ENCODE measurements at regions of chr12 and their contacts with region 1.

Region 1: DNA sequence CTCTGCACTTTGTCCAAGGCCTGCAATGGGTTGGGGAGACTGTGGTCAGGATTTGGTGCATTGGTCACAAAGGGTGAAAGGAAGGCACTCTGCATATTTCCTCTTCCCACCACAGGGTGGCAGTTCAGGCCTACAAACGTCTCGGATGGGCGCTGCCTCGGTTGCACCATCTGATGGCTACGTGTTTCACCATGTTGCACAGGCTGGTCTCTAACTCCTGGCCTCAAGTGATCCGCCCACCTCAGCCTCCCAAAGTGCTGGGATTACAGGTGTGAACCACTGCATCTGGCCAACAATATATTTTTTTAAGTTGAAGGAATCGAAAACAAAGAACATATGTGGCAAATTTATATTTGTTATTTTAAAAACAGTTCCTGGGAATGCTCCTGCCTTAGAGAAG is 35.1 kb downstream of the TMBIM6 start:
- DNase-seq: no peak
- ATAC-seq: peak; percentile 85
- H3K4me3 Mint-ChIP-seq: no peak overlapping the region
- H3K27ac Mint-ChIP-seq: no peak overlapping the region
- H3K4me1 Mint-ChIP-seq: peaks cover 13% of the 10 kb centered on the region
- H3K27me3 Mint-ChIP-seq: peaks cover 17% of the 10 kb centered on the region
- CTCF ChIP-seq: no peak

Region 2: DNA sequence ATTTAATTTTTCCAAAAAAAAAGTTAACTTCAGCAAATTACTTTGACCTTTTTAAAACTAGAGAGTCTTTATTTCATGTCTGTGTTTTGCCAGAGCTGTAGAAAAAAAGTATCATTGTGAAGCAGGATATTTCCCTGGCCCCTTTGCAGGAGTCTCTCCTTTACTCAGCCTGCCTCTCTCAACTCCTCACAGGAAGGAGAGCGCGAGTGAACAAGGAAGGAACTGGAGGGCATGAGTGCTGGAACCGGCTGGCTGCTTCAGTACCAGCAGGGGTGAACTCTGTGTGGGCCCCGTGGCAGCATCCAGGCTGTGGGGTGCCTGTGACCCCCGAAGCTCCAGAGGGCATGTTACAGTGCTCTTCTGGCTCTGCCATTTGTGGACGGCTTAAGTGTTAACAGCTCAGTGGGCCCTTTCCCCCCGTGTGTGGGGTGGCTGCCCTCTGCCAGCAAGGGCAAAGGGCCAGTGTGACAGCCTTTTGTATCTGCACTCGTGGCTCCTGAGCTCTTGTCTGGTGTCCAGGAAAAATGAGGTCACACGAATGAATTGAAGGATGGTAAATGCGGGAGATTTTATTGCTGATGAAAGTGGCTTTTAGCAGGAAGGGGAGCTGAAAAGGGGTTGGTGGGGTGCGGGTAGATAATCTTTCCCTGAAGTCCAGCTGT is 314.2 kb before region 1 on chr12:
- CTCF ChIA-PET with region 1: no interaction called
- POLR2A ChIA-PET with region 1: no interaction called
- intact Hi-C with region 1: no loop called
- DNase-seq: no peak
- ATAC-seq: no peak
- H3K4me3 Mint-ChIP-seq: no peak overlapping the region
- H3K27ac Mint-ChIP-seq: no peak overlapping the region
- H3K4me1 Mint-ChIP-seq: no peaks in the 10 kb centered on the region
- H3K27me3 Mint-ChIP-seq: no peaks in the 10 kb centered on the region
- CTCF ChIP-seq: no peak

Region 3: GRCh38 chr12:49636979-49637755 is 139.2 kb before region 1 on chr12:
- CTCF ChIA-PET with region 1: interaction called, 11 read pairs
- POLR2A ChIA-PET with region 1: no interaction called
- intact Hi-C with region 1: loop called (anchors 1 kb)
- DNase-seq: peak; percentile 22
- ATAC-seq: peak; percentile 94
- H3K4me3 Mint-ChIP-seq: no peak overlapping the region
- H3K27ac Mint-ChIP-seq: peak overlapping the region; percentile 22
- H3K4me1 Mint-ChIP-seq: peaks cover 27% of the 10 kb centered on the region
- H3K27me3 Mint-ChIP-seq: no peaks in the 10 kb centered on the region
- CTCF ChIP-seq: no peak